CD8-positive, alpha-beta T cell (primary cell): ENCODE measurements at regions of chr1 and their contacts with region 1.

Region 1: DNA sequence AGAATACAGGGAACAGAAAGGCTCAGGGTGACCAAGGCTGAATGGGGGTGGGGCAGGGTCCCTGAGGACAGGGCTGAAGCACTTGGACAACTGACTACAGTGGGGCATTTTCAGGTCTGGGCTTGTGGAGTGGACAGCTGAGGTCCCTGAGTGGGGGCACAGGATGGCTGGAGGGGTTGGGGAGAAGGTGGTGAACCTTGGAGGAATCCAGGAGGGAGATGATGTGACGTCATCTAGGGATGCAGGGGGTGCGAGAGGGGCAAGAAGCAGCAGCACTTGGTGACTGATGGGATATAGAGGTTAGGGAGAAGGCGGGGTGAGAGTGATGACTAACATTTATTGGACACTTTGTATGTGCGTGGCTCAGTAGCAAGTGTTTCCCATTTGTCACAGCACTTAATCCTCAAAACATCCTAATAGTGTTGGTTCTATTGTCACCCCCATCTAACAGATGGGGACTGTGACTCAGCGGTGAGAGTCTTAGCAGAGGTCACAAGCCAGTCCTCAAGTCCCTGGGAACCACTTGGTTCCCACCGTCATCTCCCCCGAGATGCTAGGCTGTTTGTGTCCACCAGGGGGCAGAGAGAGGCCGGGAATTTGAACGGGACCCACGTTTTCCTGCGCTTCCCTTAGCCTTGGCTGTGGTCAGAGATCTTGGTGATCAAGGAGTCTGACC is 27.9 kb upstream of the BMP8B start:
- DNase-seq: peak in 8 of 9 experiments; percentile 5 to 81 (median 62)
- ATAC-seq: peak; percentile 70
- H3K4me3 ChIP-seq: peak overlapping the region; percentile 9 to 31
- H3K4me3 Mint-ChIP-seq: peak overlapping the region; percentile 77
- H3K27ac ChIP-seq: no peak overlapping the region
- H3K27ac Mint-ChIP-seq: no peak overlapping the region
- H3K4me1 ChIP-seq: peaks cover 11% of the 10 kb centered on the region
- H3K4me1 Mint-ChIP-seq: peaks cover 13% of the 10 kb centered on the region
- H3K27me3 ChIP-seq: no peaks in the 10 kb centered on the region
- H3K27me3 Mint-ChIP-seq: peaks cover 12% of the 10 kb centered on the region
- CTCF ChIP-seq: peak; percentile 68

Region 2: DNA sequence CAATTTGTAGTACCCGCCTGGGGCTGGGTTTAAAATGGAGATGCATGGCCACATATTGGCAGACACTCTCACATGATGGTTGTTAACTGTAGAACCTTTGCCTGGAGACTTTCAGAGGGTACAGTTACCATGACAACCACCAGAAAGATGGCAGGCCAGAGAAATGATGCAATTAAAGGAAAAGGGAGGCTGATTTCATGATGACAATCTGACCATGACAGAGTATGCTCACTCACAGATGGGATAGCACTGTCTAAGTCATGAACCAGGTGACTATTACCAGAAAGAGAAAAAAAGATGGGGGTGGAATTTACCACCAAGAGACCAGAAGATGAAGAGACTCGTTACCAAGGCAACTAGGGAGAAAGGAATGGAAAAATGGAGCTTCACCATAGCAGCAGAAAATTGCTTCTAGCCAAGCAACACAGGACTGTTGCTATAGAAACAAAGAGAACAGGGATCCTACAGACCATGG is 70.2 kb after region 1 on chr1:
- CTCF ChIA-PET with region 1: no interaction called
- POLR2A ChIA-PET with region 1: no interaction called
- intact Hi-C with region 1: loop called in 1 of 2 experiments (anchors 5 kb)
- DNase-seq: no peak
- ATAC-seq: no peak
- H3K4me3 ChIP-seq: no peak overlapping the region
- H3K4me3 Mint-ChIP-seq: no peak overlapping the region
- H3K27ac ChIP-seq: no peak overlapping the region
- H3K27ac Mint-ChIP-seq: no peak overlapping the region
- H3K4me1 ChIP-seq: peaks cover 11% of the 10 kb centered on the region
- H3K4me1 Mint-ChIP-seq: peaks cover 15% of the 10 kb centered on the region
- H3K27me3 ChIP-seq: peaks cover 0 to 4% of the 10 kb centered on the region in 2 experiments
- H3K27me3 Mint-ChIP-seq: peaks cover 5% of the 10 kb centered on the region
- CTCF ChIP-seq: no peak

Region 3: DNA sequence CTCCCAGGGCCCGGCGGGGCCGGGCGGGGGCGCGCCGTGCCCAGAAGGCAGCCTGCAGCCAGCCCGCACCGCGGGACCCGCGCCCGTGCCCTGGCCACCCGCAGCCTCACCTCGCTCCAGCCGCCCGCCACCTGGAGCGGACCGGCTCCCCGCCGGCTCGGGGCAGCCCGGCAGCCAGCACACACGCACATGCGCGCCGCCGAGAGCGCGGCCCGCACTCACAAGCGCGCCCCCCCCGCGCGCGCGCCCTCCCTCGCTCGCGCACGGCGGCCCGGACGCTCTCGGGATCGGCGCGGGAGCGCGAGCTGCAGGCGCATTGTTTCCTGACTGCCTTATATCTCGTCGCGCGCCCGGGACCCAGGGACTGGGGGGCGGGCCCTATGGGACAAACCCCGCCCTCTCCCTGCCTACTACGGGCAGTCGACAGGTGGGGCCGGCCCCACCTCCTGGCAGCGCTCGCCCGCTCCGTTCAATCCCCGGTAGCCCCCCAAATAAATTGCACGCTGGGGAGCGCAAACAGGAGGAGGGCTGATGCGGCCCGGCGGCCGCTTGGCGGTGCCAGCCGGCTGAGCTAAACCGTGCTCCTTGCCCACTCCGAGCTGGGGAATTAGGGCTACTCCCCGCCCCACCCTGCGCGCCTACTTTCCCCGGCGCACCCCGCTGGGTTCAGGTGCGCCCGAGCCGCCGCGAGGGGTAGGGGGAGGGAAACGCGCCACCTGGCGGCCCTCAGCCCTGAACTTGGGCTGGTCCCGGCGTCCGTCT is 85.3 kb after region 1 on chr1 and contains the start of gene MYCL:
- CTCF ChIA-PET with region 1: interaction called, 149 read pairs
- POLR2A ChIA-PET with region 1: interaction called, 7 read pairs
- intact Hi-C with region 1: loop called in 1 of 2 experiments (anchors 1 kb)
- DNase-seq: peak; percentile 25 to 80 (median 69)
- ATAC-seq: peak; percentile 81
- H3K4me3 ChIP-seq: peak within 1 kb of the TSS; percentile 61 to 66
- H3K4me3 Mint-ChIP-seq: peak within 1 kb of the TSS; percentile 77
- H3K27ac ChIP-seq: no peak within 1 kb of the TSS
- H3K27ac Mint-ChIP-seq: no peak within 1 kb of the TSS
- H3K4me1 ChIP-seq: peaks cover 4% of the 10 kb centered on the region
- H3K4me1 Mint-ChIP-seq: peaks cover 7% of the 10 kb centered on the region
- H3K27me3 ChIP-seq: peaks cover 18 to 21% of the 10 kb centered on the region in 2 experiments
- H3K27me3 Mint-ChIP-seq: peaks cover 54% of the 10 kb centered on the region
- CTCF ChIP-seq: peak; percentile 63
- total RNA-seq, gene MYCL: 0.22 TPM in 1 of 2 experiments, not detected in the other

Region 4: GRCh38 chr1:39973503-39974135 is 157.1 kb after region 1 on chr1:
- CTCF ChIA-PET with region 1: interaction called, 84 read pairs
- POLR2A ChIA-PET with region 1: no interaction called
- intact Hi-C with region 1: loop called in 1 of 2 experiments (anchors 1 kb)
- DNase-seq: peak; percentile 51 to 84 (median 76)
- ATAC-seq: peak; percentile 75
- H3K4me3 ChIP-seq: no peak overlapping the region
- H3K4me3 Mint-ChIP-seq: no peak overlapping the region
- H3K27ac ChIP-seq: no peak overlapping the region
- H3K27ac Mint-ChIP-seq: no peak overlapping the region
- H3K4me1 ChIP-seq: peaks cover 3% of the 10 kb centered on the region
- H3K4me1 Mint-ChIP-seq: peaks cover 5% of the 10 kb centered on the region
- H3K27me3 ChIP-seq: no peaks in the 10 kb centered on the region
- H3K27me3 Mint-ChIP-seq: no peaks in the 10 kb centered on the region
- CTCF ChIP-seq: peak; percentile 92

Region 5: GRCh38 chr1:40032240-40032891 is 215.8 kb after region 1 on chr1:
- CTCF ChIA-PET with region 1: interaction called, 7 read pairs
- POLR2A ChIA-PET with region 1: no interaction called
- intact Hi-C with region 1: loop called (anchors 1 to 5 kb)
- DNase-seq: peak; percentile 15 to 77 (median 60)
- ATAC-seq: peak; percentile 67
- H3K4me3 ChIP-seq: no peak overlapping the region
- H3K4me3 Mint-ChIP-seq: no peak overlapping the region
- H3K27ac ChIP-seq: no peak overlapping the region
- H3K27ac Mint-ChIP-seq: peak overlapping the region; percentile 8
- H3K4me1 ChIP-seq: peaks cover 45% of the 10 kb centered on the region
- H3K4me1 Mint-ChIP-seq: peaks cover 49% of the 10 kb centered on the region
- H3K27me3 ChIP-seq: no peaks in the 10 kb centered on the region
- H3K27me3 Mint-ChIP-seq: no peaks in the 10 kb centered on the region
- CTCF ChIP-seq: peak; percentile 47

Region 6: GRCh38 chr1:40344597-40344996 is 528.0 kb after region 1 on chr1:
- CTCF ChIA-PET with region 1: interaction called, 5 read pairs
- POLR2A ChIA-PET with region 1: no interaction called
- intact Hi-C with region 1: loop called in 1 of 2 experiments (anchors 5 kb)
- DNase-seq: peak in 6 of 9 experiments; percentile 9 to 57 (median 30)
- ATAC-seq: peak; percentile 75
- H3K4me3 ChIP-seq: no peak overlapping the region
- H3K4me3 Mint-ChIP-seq: peak overlapping the region; percentile 60
- H3K27ac ChIP-seq: no peak overlapping the region
- H3K27ac Mint-ChIP-seq: peak overlapping the region; percentile 69
- H3K4me1 ChIP-seq: peaks cover 37% of the 10 kb centered on the region
- H3K4me1 Mint-ChIP-seq: peaks cover 51% of the 10 kb centered on the region
- H3K27me3 ChIP-seq: no peaks in the 10 kb centered on the region
- H3K27me3 Mint-ChIP-seq: no peaks in the 10 kb centered on the region
- CTCF ChIP-seq: no peak

Region 7: GRCh38 chr1:41078616-41079015 is 1262.1 kb after region 1 on chr1:
- CTCF ChIA-PET with region 1: no interaction called
- POLR2A ChIA-PET with region 1: no interaction called
- intact Hi-C with region 1: no loop called
- DNase-seq: no peak
- ATAC-seq: no peak
- H3K4me3 ChIP-seq: no peak overlapping the region
- H3K4me3 Mint-ChIP-seq: no peak overlapping the region
- H3K27ac ChIP-seq: no peak overlapping the region
- H3K27ac Mint-ChIP-seq: no peak overlapping the region
- H3K4me1 ChIP-seq: no peaks in the 10 kb centered on the region
- H3K4me1 Mint-ChIP-seq: no peaks in the 10 kb centered on the region
- H3K27me3 ChIP-seq: no peaks in the 10 kb centered on the region
- H3K27me3 Mint-ChIP-seq: no peaks in the 10 kb centered on the region
- CTCF ChIP-seq: no peak

Region 8: GRCh38 chr1:41242342-41243078 is 1426.0 kb after region 1 on chr1:
- CTCF ChIA-PET with region 1: no interaction called
- POLR2A ChIA-PET with region 1: no interaction called
- intact Hi-C with region 1: no loop called
- DNase-seq: peak in 1 of 9 experiments; percentile 5
- ATAC-seq: peak; percentile 3
- H3K4me3 ChIP-seq: peak overlapping the region; percentile 50 to 63
- H3K4me3 Mint-ChIP-seq: peak overlapping the region; percentile 80
- H3K27ac ChIP-seq: peak overlapping the region; percentile 7 to 62
- H3K27ac Mint-ChIP-seq: peak overlapping the region; percentile 85
- H3K4me1 ChIP-seq: peaks cover 10% of the 10 kb centered on the region
- H3K4me1 Mint-ChIP-seq: peaks cover 18% of the 10 kb centered on the region
- H3K27me3 ChIP-seq: no peaks in the 10 kb centered on the region
- H3K27me3 Mint-ChIP-seq: peaks cover 2% of the 10 kb centered on the region
- CTCF ChIP-seq: no peak